GM10248 (cell line): ENCODE measurements at regions of chr5 and their contacts with region 1.

Region 1: DNA sequence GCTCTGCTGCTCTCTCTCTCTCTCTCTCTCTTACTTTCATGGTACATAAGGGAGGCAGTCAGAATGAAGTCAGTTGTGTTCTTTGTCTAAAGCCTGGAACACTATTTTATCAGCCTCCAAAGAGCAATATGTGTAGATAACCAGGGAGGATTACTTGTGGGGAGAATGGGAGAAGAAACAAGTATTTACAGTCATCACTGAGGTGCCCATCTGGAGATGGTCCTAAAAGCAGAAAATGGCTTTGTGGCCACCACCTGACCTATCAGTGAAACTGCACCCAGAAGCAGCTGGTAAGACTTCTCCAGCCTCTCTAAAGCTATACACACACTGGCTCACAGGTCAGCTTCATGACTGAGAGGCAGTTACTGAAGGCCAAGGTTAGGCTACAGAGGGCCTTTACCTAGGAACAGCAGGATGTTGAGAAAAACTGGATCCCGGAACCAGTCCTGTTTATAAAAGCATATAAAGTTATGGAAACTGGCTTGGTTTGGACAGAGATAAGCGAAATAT is 75.1 kb downstream of the MRPS27 start:
- DNase-seq: peak; percentile 22
- CTCF ChIP-seq: peak; percentile 44

Region 2: GRCh38 chr5:72125941-72126620 is 118.8 kb before region 1 on chr5:
- CTCF ChIA-PET with region 1: no interaction called
- POLR2A ChIA-PET with region 1: no interaction called
- DNase-seq: no peak
- CTCF ChIP-seq: no peak

Region 3: DNA sequence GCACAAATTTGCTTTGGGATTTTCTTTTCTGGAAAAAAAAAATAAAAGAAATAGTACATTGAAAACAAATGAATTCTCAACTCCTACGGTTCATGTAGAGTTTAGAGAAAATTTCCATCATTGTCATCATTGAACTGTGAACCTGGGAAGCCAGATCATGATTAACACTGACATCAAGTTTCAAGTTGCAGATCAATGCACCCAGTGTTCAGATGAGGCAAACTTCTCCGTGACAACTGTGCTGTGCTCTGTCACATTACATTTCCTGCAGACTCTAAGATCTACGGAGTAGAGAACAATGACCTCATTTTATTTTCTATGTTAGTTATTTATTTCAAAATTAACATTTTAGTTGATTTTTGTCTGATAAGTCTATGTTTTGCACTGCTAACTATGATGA is 37.9 kb before region 1 on chr5:
- CTCF ChIA-PET with region 1: no interaction called
- POLR2A ChIA-PET with region 1: no interaction called
- DNase-seq: no peak
- CTCF ChIP-seq: no peak

Region 4: GRCh38 chr5:72234265-72234700 is 10.6 kb before region 1 on chr5:
- CTCF ChIA-PET with region 1: interaction called, 11 read pairs
- POLR2A ChIA-PET with region 1: no interaction called
- DNase-seq: peak; percentile 50
- CTCF ChIP-seq: no peak

Region 5: GRCh38 chr5:72377910-72378635 is 133.2 kb after region 1 on chr5:
- CTCF ChIA-PET with region 1: no interaction called
- POLR2A ChIA-PET with region 1: no interaction called
- DNase-seq: no peak
- CTCF ChIP-seq: no peak